Calu3 (cell line): ENCODE measurements at regions of chr5 and their contacts with region 1.

Region 1: DNA sequence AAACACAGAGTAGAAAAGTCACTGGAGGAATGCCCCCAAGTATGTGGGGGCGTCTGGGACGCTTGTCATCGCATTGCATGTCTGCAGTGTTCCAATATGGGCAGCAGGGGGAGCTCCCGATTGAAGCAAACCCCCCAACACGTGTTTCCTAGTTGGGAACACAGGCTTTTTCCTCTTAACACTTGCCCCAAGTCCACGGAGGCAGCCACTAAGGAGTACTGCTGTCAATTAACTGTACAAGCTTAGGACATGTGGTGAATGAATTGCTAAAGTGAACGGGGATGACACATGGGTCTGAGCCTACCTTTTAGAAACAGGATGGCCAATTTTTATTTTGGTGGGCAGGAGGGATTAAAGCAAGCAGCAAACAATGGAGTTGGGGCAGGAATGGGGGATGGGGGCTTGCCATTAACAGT is 2.2 kb downstream of the GABRB2 start:
- DNase-seq: peak; percentile 55
- H3K4me3 Mint-ChIP-seq: no peak overlapping the region
- H3K27ac Mint-ChIP-seq: no peak overlapping the region
- H3K4me1 Mint-ChIP-seq: peaks cover 8% of the 10 kb centered on the region
- H3K27me3 Mint-ChIP-seq: peaks cover 50% of the 10 kb centered on the region
- CTCF ChIP-seq: peak; percentile 81

Region 2: GRCh38 chr5:161713042-161713441 is 168.7 kb after region 1 on chr5:
- CTCF ChIA-PET with region 1: no interaction called
- intact Hi-C with region 1: no loop called
- DNase-seq: no peak
- H3K4me3 Mint-ChIP-seq: no peak overlapping the region
- H3K27ac Mint-ChIP-seq: no peak overlapping the region
- H3K4me1 Mint-ChIP-seq: no peaks in the 10 kb centered on the region
- H3K27me3 Mint-ChIP-seq: no peaks in the 10 kb centered on the region
- CTCF ChIP-seq: no peak

Region 3: DNA sequence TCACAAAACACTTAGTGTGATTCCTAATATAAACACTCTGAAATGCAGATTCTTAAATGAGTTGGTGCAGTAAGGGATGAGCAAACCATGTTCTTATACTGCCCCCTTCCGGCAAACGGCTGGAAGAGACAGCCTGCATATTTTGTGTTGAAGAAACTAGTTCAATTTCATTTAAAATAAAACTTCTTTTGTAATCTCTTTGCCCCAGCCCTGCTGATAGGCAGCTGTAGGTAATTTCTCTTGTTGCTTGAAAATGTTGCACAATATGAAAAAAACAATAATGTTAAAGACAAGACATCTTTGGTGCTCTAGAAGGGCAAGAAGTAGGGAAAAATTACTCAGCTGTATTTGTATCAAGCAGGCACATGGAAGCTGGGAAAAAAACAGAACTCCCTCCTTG is 1803.3 kb after region 1 on chr5:
- CTCF ChIA-PET with region 1: no interaction called
- intact Hi-C with region 1: loop called (anchors 1 kb)
- DNase-seq: peak; percentile 76
- H3K4me3 Mint-ChIP-seq: no peak overlapping the region
- H3K27ac Mint-ChIP-seq: no peak overlapping the region
- H3K4me1 Mint-ChIP-seq: no peaks in the 10 kb centered on the region
- H3K27me3 Mint-ChIP-seq: no peaks in the 10 kb centered on the region
- CTCF ChIP-seq: peak; percentile 69